Lower leg skin (tissue), 4 donors: ENCODE measurements at regions of chr14 and their contacts with region 1.

Region 1: DNA sequence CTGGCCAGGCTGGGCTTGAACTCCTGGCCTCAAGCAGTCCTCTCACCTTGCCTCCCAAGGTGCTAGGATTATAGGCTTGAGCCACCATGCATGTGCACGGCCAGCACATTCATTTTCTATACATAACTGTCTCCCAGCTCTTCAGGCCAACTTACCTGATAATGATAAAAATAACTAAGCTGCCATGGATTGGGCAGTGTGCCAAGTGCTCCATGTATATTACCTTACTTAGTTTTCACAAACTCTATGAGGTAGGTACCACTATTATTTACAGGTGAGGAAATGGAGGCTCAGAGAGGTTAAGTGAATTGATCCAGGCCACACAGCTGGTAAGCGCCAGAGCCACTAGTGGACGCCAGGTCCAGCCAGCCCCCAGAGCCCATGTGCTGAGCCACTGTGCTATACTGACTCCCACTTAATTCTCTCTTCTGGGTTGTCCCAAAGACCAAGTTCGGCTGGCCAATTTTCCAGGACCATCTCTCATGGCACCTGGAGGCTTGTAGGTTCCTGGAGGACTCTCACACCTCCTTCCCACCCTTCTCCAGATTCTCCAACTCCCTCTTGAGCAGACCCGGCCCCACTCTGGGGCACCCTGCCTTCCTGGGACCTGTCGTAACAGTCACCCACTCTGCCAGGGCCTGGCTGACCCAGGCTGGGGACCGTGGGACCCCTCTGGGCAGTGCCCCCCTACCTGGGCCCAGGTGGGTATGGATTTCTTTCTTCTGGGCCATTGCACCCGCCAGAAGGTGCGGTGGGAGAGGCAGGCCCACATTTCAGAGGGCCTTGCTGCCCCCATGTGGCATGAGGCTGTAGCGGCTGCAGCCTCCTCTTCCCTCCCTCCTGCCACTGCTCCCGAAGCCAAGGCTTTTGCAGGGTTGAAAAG is 30.2 kb upstream of the CIPC start:
- DNase-seq: peak in 1 of 2 donors; percentile 94
- H3K4me3 ChIP-seq: no peak overlapping the region
- CTCF ChIP-seq: no peak
- POLR2A ChIP-seq: no peak

Region 2: GRCh38 chr14:76876076-76876475 is 191.8 kb before region 1 on chr14:
- intact Hi-C with region 1: loop called (anchors 1 kb)
- DNase-seq: peak in 1 of 2 donors; percentile 56
- H3K4me3 ChIP-seq: no peak overlapping the region
- CTCF ChIP-seq: peak in 1 of 3 donors; percentile 92
- POLR2A ChIP-seq: no peak

Region 3: DNA sequence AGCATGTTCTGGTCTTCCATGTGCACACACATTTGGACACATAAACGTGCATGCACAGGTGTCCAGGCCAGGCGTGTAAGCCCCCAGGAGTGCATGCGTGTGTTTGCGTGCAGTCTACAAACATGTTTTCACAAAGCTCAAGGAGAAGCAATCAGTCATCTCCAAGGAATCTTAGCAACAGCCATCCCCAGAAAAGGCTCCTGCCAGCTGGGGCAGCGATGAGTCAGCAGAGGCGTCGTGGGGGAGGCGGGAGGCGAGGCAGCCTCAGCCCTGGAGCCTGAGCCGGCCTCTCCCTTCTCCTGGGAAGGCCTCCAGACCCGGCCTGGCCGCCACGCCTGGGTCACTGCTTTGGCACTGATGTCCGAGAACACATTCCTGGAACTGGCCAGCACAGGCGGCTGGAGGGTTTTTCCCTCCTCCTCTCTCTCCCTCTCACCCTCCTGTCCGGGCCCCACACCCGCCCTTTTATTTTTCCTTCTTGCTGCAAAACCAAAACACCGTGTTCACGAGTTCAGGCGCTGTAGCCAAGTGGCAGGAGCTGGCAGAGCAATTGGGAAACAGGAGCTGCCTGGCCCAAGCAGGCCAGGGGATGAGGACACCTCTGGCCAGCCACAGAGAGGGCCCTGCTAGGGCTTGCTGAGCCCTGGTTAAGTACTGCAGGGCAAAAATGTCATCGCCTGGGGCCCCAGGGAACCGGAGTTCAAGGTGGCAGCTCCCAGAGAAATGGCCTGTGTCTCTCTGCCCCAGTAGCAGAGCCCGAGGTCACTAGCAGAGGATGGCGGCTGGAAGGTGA is 148.9 kb before region 1 on chr14:
- intact Hi-C with region 1: loop called (anchors 10 kb)
- DNase-seq: peak; percentile 92 to 98
- H3K4me3 ChIP-seq: no peak overlapping the region
- CTCF ChIP-seq: no peak
- POLR2A ChIP-seq: no peak

Region 4: DNA sequence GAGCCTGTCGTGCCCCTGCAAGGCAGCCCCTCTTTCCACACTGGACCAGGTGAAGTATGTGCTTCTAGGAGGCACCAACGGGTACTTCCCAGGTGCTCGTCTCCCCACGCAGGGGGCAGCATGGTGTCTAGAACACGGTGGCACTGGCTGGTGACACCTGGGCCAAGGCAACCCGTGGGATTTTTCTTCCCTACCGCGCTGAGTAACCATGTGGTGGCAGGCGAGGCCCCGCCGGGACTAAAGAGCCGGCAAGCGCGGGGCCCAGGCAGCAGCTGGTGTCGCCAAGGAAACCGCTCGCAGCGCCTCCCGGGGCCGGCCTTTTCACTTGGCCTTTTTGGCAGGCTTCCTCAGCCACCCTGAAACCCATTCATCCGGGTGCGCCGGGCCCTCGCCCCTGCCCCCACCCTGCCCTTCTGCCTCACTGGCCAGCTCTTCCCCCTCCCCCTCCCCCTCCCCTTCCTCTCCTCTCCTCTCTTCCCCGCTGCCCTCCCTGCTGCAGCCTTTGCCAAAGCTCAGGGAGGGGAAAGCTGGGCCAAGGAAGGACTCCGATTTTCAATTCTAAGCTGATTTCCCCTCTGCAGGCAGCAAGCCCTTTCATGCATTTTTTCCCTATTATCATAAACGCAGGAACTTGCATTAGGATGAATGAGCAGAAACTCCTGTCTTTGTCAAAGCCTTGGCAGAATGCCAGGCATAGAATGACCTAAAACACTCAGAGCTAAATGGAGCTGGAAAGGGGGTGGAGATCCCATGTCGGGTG is 120.6 kb before region 1 on chr14:
- intact Hi-C with region 1: loop called (anchors 10 kb)
- DNase-seq: peak; percentile 75 to 97
- H3K4me3 ChIP-seq: no peak overlapping the region
- CTCF ChIP-seq: no peak
- POLR2A ChIP-seq: no peak